ENCODE measurements at regions of chr1 and their contacts with region 1.

Region 1: GRCh38 chr1:56507925-56508522 is 71.3 kb downstream of the PLPP3 start:
- DNase-seq: no peak
- ATAC-seq: no peak
- H3K4me3 ChIP-seq: no peak overlapping the region
- H3K4me3 Mint-ChIP-seq: no peak overlapping the region
- H3K27ac ChIP-seq: no peak overlapping the region
- H3K27ac Mint-ChIP-seq: no peak overlapping the region
- H3K4me1 ChIP-seq: no peaks in the 10 kb centered on the region
- H3K4me1 Mint-ChIP-seq: no peaks in the 10 kb centered on the region
- H3K27me3 ChIP-seq: no peaks in the 10 kb centered on the region
- H3K27me3 Mint-ChIP-seq: peaks cover 7 to 9% of the 10 kb centered on the region in 2 donors

Region 2: GRCh38 chr1:56472860-56473259 is 35.2 kb before region 1 on chr1:
- CTCF ChIA-PET with region 1: no interaction called
- POLR2A ChIA-PET with region 1: no interaction called
- DNase-seq: peak in 1 of 35 experiments; percentile 6
- ATAC-seq: no peak
- H3K4me3 ChIP-seq: no peak overlapping the region
- H3K4me3 Mint-ChIP-seq: no peak overlapping the region
- H3K27ac ChIP-seq: no peak overlapping the region
- H3K27ac Mint-ChIP-seq: no peak overlapping the region
- H3K4me1 ChIP-seq: peaks cover 0 to 3% of the 10 kb centered on the region in 2 experiments
- H3K4me1 Mint-ChIP-seq: peaks cover 0 to 6% (median 0%) of the 10 kb centered on the region in 3 donors
- H3K27me3 ChIP-seq: peaks cover 0 to 17% of the 10 kb centered on the region in 2 experiments
- H3K27me3 Mint-ChIP-seq: peaks cover 21 to 29% of the 10 kb centered on the region in 2 donors

Region 3: GRCh38 chr1:56525489-56526041 is 17.5 kb after region 1 on chr1:
- CTCF ChIA-PET with region 1: no interaction called
- POLR2A ChIA-PET with region 1: no interaction called
- DNase-seq: peak in 6 of 35 experiments; percentile 0 to 21 (median 2)
- ATAC-seq: no peak
- H3K4me3 ChIP-seq: no peak overlapping the region
- H3K4me3 Mint-ChIP-seq: no peak overlapping the region
- H3K27ac ChIP-seq: no peak overlapping the region
- H3K27ac Mint-ChIP-seq: no peak overlapping the region
- H3K4me1 ChIP-seq: no peaks in the 10 kb centered on the region
- H3K4me1 Mint-ChIP-seq: peaks cover 0 to 3% (median 0%) of the 10 kb centered on the region in 3 donors
- H3K27me3 ChIP-seq: no peaks in the 10 kb centered on the region
- H3K27me3 Mint-ChIP-seq: no peaks in the 10 kb centered on the region

Region 4: DNA sequence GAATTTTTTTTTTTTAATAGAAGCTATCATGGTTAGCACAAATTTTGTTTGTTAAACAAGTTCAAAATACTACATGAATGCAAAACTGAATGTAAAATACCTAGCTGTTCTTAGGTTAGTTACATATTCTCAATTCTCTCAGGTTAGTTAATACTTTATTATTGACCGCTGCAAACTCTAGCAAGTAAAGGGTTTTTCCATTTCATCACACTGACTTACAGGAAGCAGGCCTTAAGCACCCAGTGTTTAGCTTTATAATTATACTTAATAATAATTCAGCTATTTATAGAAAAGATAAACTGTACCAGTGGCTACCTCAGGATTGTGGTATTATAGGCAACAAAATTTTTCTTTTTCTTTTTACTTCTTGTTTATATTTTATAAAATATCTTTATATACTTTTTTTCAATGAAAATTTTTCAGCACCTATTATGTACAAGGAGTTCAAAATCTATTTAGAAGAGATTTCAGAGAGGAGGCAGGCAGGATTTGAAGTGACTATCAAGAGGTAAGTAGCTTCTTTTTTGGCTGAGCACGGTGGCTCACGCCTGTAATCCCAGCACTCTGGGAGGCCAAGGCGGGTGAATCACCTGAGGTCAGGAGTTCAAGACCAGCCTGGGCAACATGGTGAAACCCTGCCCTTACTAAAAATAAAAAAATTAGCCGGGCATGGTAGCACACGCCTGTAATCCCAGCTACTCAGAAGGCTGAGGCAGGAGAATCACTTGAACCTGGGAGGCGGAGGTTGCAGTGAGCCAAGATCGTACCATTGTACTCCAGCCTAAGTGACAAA is 53.4 kb after region 1 on chr1:
- CTCF ChIA-PET with region 1: interaction called in 1 of 2 experiments, 13 read pairs
- POLR2A ChIA-PET with region 1: no interaction called
- DNase-seq: no peak
- ATAC-seq: no peak
- H3K4me3 ChIP-seq: no peak overlapping the region
- H3K4me3 Mint-ChIP-seq: no peak overlapping the region
- H3K27ac ChIP-seq: no peak overlapping the region
- H3K27ac Mint-ChIP-seq: no peak overlapping the region
- H3K4me1 ChIP-seq: no peaks in the 10 kb centered on the region
- H3K4me1 Mint-ChIP-seq: no peaks in the 10 kb centered on the region
- H3K27me3 ChIP-seq: no peaks in the 10 kb centered on the region
- H3K27me3 Mint-ChIP-seq: no peaks in the 10 kb centered on the region